ENCODE measurements at regions of chr5 and their contacts with region 1.

Region 1: DNA sequence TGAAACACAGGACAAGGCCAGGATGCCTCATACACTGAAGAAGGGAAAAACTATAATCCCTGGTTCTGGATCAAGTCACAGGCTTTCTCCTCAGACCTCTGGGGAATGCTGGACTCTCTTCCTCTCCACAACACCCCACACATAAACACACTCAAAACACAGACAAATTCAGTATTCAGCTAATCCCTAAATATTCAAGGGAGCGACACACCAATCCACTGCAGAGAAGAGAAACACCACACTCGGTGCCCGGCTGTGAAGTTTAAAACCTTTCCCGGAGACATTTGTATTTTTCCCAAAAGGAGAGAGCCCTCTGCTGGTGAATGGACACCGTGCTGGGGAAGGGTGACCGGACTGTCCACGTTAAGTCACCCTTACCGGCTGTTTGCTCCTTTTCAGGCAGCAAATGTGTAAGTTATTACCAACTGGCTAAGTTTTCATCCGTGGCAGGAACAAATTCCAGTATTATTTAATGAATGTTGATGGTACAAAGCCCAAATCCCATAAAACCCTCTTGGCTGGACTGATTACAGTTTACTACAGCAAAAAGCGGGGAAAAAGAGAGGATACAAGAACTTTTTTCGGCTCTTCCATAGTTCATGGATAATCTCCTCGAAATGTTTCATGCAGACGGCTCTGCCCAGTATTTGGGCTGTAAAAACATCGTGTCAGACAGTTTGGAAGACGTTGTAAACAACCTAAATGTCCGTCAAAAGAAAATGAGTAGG is 130.9 kb upstream of the SLC30A5 start:
- DNase-seq: peak; percentile 46 to 77
- ATAC-seq: peak; percentile 76 to 96 (median 88)
- H3K4me3 ChIP-seq: no peak overlapping the region
- H3K27ac ChIP-seq: peak overlapping the region in 2 of 10 donors; percentile 16 to 43
- H3K4me1 ChIP-seq: peaks cover 0 to 13% (median 5%) of the 10 kb centered on the region in 9 donors
- H3K27me3 ChIP-seq: no peaks in the 10 kb centered on the region
- CTCF ChIP-seq: peak; percentile 58 to 94 (median 84)

Region 2: GRCh38 chr5:68279984-68280383 is 682.9 kb before region 1 on chr5:
- intact Hi-C with region 1: loop called in 5 of 10 experiments (anchors 2 to 10 kb)
- DNase-seq: no peak
- ATAC-seq: peak in 1 of 8 donors; percentile 7
- H3K4me3 ChIP-seq: peak overlapping the region in 1 of 10 donors; percentile 29
- H3K27ac ChIP-seq: peak overlapping the region in 2 of 10 donors; percentile 2 to 70
- H3K4me1 ChIP-seq: peaks cover 0 to 26% (median 22%) of the 10 kb centered on the region in 9 donors
- H3K27me3 ChIP-seq: no peaks in the 10 kb centered on the region
- CTCF ChIP-seq: no peak

Region 3: GRCh38 chr5:68303038-68303738 is 659.7 kb before region 1 on chr5:
- intact Hi-C with region 1: loop called in 2 of 10 experiments (anchors 5 to 10 kb)
- DNase-seq: no peak
- ATAC-seq: peak in 1 of 8 donors; percentile 26
- H3K4me3 ChIP-seq: no peak overlapping the region
- H3K27ac ChIP-seq: no peak overlapping the region
- H3K4me1 ChIP-seq: peaks cover 0 to 22% (median 4%) of the 10 kb centered on the region in 9 donors
- H3K27me3 ChIP-seq: no peaks in the 10 kb centered on the region
- CTCF ChIP-seq: no peak

Region 4: DNA sequence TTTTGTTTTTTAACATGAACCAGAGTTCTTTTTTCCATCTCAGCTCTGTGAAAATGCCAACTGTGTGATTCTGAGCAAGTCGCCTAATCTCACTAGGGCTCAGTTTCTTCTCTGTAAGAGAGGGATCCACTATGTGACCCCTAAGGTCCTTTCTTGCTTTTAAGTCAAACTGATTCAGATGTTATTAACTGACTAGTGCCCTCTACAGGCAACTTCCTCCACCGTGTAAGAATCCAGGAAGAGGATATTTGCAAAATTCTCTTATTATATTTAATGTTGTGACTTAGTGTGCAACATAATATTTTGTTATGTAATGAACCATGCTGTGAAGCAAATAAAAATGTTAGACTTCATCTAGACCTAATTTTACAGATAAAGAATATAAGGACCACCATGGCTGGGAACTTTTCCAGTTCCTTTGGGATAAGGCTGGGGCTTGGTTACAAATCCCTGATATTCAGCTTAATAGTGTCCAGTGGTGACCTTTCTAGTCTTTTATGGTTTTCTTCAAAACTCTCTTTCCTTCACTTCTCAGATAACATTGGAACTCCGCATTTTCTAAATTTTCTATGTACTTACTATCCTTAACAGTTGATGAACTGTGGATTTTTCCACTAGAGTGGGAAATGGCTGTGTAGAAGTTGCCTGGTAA is 502.6 kb before region 1 on chr5:
- intact Hi-C with region 1: loop called in 7 of 10 experiments (anchors 5 to 10 kb)
- DNase-seq: peak in 1 of 2 donors; percentile 57
- ATAC-seq: peak in 5 of 8 donors; percentile 42 to 71 (median 59)
- H3K4me3 ChIP-seq: no peak overlapping the region
- H3K27ac ChIP-seq: peak overlapping the region in 1 of 10 donors; percentile 11
- H3K4me1 ChIP-seq: peaks cover 0 to 29% (median 8%) of the 10 kb centered on the region in 9 donors
- H3K27me3 ChIP-seq: no peaks in the 10 kb centered on the region
- CTCF ChIP-seq: peak; percentile 46 to 90 (median 78)

Region 5: GRCh38 chr5:68476854-68477253 is 486.1 kb before region 1 on chr5:
- intact Hi-C with region 1: loop called in 1 of 10 experiments (anchors 1 kb)
- DNase-seq: no peak
- ATAC-seq: no peak
- H3K4me3 ChIP-seq: no peak overlapping the region
- H3K27ac ChIP-seq: no peak overlapping the region
- H3K4me1 ChIP-seq: peaks cover 0 to 26% (median 7%) of the 10 kb centered on the region in 9 donors
- H3K27me3 ChIP-seq: no peaks in the 10 kb centered on the region
- CTCF ChIP-seq: peak in 1 of 9 donors; percentile 13

Region 6: GRCh38 chr5:68942169-68942568 is 20.8 kb before region 1 on chr5:
- intact Hi-C with region 1: no loop called
- DNase-seq: no peak
- ATAC-seq: no peak
- H3K4me3 ChIP-seq: no peak overlapping the region
- H3K27ac ChIP-seq: no peak overlapping the region
- H3K4me1 ChIP-seq: no peaks in the 10 kb centered on the region
- H3K27me3 ChIP-seq: no peaks in the 10 kb centered on the region
- CTCF ChIP-seq: no peak